Lower lobe of right lung (tissue), 2 donors: ENCODE measurements at regions of chr9 and their contacts with region 1.

Region 1: GRCh38 chr9:104181911-104182310 is 87.8 kb downstream of the SMC2 start:
- DNase-seq: no peak
- ATAC-seq: no peak
- H3K4me3 ChIP-seq: no peak overlapping the region
- H3K27ac ChIP-seq: no peak overlapping the region
- H3K4me1 ChIP-seq: no peaks in the 10 kb centered on the region
- H3K27me3 ChIP-seq: no peaks in the 10 kb centered on the region
- CTCF ChIP-seq: no peak

Region 2: GRCh38 chr9:104386425-104387069 is 204.6 kb after region 1 on chr9:
- intact Hi-C with region 1: loop called (anchors 10 kb)
- DNase-seq: no peak
- ATAC-seq: peak in 1 of 2 donors; percentile 74
- H3K4me3 ChIP-seq: no peak overlapping the region
- H3K27ac ChIP-seq: no peak overlapping the region
- H3K4me1 ChIP-seq: no peaks in the 10 kb centered on the region
- H3K27me3 ChIP-seq: no peaks in the 10 kb centered on the region
- CTCF ChIP-seq: peak; percentile 64

Region 3: GRCh38 chr9:104448036-104448435 is 266.1 kb after region 1 on chr9:
- intact Hi-C with region 1: no loop called
- DNase-seq: no peak
- ATAC-seq: no peak
- H3K4me3 ChIP-seq: no peak overlapping the region
- H3K27ac ChIP-seq: no peak overlapping the region
- H3K4me1 ChIP-seq: no peaks in the 10 kb centered on the region
- H3K27me3 ChIP-seq: no peaks in the 10 kb centered on the region
- CTCF ChIP-seq: no peak

Region 4: GRCh38 chr9:105191508-105192121 is 1009.7 kb after region 1 on chr9:
- intact Hi-C with region 1: no loop called
- DNase-seq: no peak
- ATAC-seq: peak; percentile 81 to 82
- H3K4me3 ChIP-seq: no peak overlapping the region
- H3K27ac ChIP-seq: no peak overlapping the region
- H3K4me1 ChIP-seq: peaks cover 30% of the 10 kb centered on the region
- H3K27me3 ChIP-seq: no peaks in the 10 kb centered on the region
- CTCF ChIP-seq: no peak